CD8-positive, alpha-beta T cell (primary cell): ENCODE measurements at regions of chr3 and their contacts with region 1.

Region 1: DNA sequence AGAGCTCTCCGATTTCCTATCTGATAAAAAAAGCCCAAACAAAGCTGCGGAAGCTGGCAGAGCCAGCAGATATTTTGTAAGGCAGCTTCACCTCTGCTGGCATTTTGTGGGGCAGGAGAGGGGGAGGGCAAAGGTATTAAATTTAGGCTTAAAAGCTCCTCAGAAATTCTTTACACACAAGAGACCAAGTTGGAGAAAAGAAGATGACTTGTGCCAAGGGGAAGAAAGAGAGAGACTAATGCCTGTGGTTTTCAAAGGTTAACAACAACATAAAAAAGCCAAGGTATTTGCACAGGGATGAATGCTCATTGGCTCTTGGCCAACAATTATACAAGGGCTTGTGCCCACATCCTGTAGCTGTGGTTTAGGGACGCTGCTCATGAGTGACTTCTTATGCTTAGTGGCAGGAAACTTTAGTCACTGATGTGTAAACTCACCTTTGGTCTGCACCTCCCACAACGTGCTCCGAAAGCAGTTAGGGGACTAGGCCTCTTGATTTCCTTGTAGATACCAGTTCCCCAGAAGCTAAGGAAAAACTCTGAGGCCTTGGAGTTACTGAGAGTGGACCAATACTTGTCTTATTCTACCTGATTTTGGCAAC is 152.9 kb downstream of the TPRG1 start:
- DNase-seq: peak; percentile 44 to 97 (median 81)
- ATAC-seq: peak; percentile 96
- H3K4me3 ChIP-seq: peak overlapping the region in 1 of 2 experiments; percentile 6
- H3K4me3 Mint-ChIP-seq: peak overlapping the region; percentile 75
- H3K27ac ChIP-seq: peak overlapping the region in 1 of 2 experiments; percentile 55
- H3K27ac Mint-ChIP-seq: peak overlapping the region; percentile 95
- H3K4me1 ChIP-seq: peaks cover 44% of the 10 kb centered on the region
- H3K4me1 Mint-ChIP-seq: peaks cover 68% of the 10 kb centered on the region
- H3K27me3 ChIP-seq: no peaks in the 10 kb centered on the region
- H3K27me3 Mint-ChIP-seq: no peaks in the 10 kb centered on the region
- CTCF ChIP-seq: no peak

Region 2: GRCh38 chr3:189132231-189132707 is 192.4 kb before region 1 on chr3:
- CTCF ChIA-PET with region 1: no interaction called
- POLR2A ChIA-PET with region 1: interaction called, 3 read pairs
- intact Hi-C with region 1: loop called (anchors 2 to 5 kb)
- DNase-seq: peak; percentile 51 to 93 (median 78)
- ATAC-seq: peak; percentile 92
- H3K4me3 ChIP-seq: peak overlapping the region in 1 of 2 experiments; percentile 4
- H3K4me3 Mint-ChIP-seq: peak overlapping the region; percentile 71
- H3K27ac ChIP-seq: peak overlapping the region; percentile 47 to 86
- H3K27ac Mint-ChIP-seq: peak overlapping the region; percentile 97
- H3K4me1 ChIP-seq: peaks cover 24% of the 10 kb centered on the region
- H3K4me1 Mint-ChIP-seq: peaks cover 30% of the 10 kb centered on the region
- H3K27me3 ChIP-seq: no peaks in the 10 kb centered on the region
- H3K27me3 Mint-ChIP-seq: no peaks in the 10 kb centered on the region
- CTCF ChIP-seq: no peak

Region 3: GRCh38 chr3:189288348-189289235 is 36.0 kb before region 1 on chr3:
- CTCF ChIA-PET with region 1: no interaction called
- POLR2A ChIA-PET with region 1: interaction called, 9 read pairs
- intact Hi-C with region 1: loop called in 1 of 2 experiments (anchors 5 kb)
- DNase-seq: no peak
- ATAC-seq: no peak
- H3K4me3 ChIP-seq: no peak overlapping the region
- H3K4me3 Mint-ChIP-seq: no peak overlapping the region
- H3K27ac ChIP-seq: no peak overlapping the region
- H3K27ac Mint-ChIP-seq: no peak overlapping the region
- H3K4me1 ChIP-seq: peaks cover 14% of the 10 kb centered on the region
- H3K4me1 Mint-ChIP-seq: peaks cover 36% of the 10 kb centered on the region
- H3K27me3 ChIP-seq: no peaks in the 10 kb centered on the region
- H3K27me3 Mint-ChIP-seq: no peaks in the 10 kb centered on the region
- CTCF ChIP-seq: no peak

Region 4: DNA sequence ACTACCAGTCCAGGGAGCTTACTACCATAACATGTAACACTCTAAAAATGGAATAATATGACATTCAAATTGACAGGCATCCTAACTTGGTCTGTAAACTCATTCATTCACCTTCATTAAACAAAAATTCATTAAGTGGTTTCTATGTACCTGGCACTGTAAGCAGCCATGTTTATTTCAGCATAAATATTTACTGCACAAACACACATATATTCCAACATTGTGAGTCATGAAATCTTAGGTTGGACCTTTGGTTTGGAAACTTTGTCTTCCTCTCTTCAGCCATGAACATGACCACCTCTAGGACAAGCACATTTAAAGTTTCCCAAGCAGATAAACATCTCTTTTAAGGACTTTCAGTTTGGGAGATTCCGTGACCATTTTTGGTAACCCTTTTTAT is 21.1 kb before region 1 on chr3:
- CTCF ChIA-PET with region 1: no interaction called
- POLR2A ChIA-PET with region 1: interaction called, 7 read pairs
- intact Hi-C with region 1: loop called in 1 of 2 experiments (anchors 2 kb)
- DNase-seq: no peak
- ATAC-seq: no peak
- H3K4me3 ChIP-seq: no peak overlapping the region
- H3K4me3 Mint-ChIP-seq: no peak overlapping the region
- H3K27ac ChIP-seq: no peak overlapping the region
- H3K27ac Mint-ChIP-seq: no peak overlapping the region
- H3K4me1 ChIP-seq: no peaks in the 10 kb centered on the region
- H3K4me1 Mint-ChIP-seq: peaks cover 39% of the 10 kb centered on the region
- H3K27me3 ChIP-seq: no peaks in the 10 kb centered on the region
- H3K27me3 Mint-ChIP-seq: no peaks in the 10 kb centered on the region
- CTCF ChIP-seq: no peak

Region 5: DNA sequence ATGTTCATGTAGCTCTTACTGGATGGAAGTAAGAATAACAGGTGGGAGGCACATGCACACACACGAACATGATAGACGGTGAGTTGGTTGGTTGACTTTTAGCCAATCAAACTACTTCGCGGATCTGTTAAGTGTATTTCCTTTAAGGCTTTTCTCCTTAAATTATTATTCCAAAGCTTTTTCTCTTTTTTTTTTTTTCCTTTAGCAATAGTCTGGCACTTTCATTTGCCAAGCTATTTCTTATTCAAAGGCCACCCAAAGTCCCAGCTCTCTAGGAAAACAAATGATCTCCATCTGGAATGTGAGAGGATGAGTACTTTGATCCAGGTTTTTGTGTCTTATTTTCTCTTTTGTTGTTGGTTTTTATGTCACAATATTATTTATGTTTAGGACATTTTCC is 11.8 kb before region 1 on chr3:
- CTCF ChIA-PET with region 1: interaction called, 3 read pairs
- POLR2A ChIA-PET with region 1: interaction called, 11 read pairs
- intact Hi-C with region 1: no loop called
- DNase-seq: no peak
- ATAC-seq: no peak
- H3K4me3 ChIP-seq: no peak overlapping the region
- H3K4me3 Mint-ChIP-seq: no peak overlapping the region
- H3K27ac ChIP-seq: no peak overlapping the region
- H3K27ac Mint-ChIP-seq: no peak overlapping the region
- H3K4me1 ChIP-seq: no peaks in the 10 kb centered on the region
- H3K4me1 Mint-ChIP-seq: peaks cover 12% of the 10 kb centered on the region
- H3K27me3 ChIP-seq: no peaks in the 10 kb centered on the region
- H3K27me3 Mint-ChIP-seq: no peaks in the 10 kb centered on the region
- CTCF ChIP-seq: no peak

Region 6: DNA sequence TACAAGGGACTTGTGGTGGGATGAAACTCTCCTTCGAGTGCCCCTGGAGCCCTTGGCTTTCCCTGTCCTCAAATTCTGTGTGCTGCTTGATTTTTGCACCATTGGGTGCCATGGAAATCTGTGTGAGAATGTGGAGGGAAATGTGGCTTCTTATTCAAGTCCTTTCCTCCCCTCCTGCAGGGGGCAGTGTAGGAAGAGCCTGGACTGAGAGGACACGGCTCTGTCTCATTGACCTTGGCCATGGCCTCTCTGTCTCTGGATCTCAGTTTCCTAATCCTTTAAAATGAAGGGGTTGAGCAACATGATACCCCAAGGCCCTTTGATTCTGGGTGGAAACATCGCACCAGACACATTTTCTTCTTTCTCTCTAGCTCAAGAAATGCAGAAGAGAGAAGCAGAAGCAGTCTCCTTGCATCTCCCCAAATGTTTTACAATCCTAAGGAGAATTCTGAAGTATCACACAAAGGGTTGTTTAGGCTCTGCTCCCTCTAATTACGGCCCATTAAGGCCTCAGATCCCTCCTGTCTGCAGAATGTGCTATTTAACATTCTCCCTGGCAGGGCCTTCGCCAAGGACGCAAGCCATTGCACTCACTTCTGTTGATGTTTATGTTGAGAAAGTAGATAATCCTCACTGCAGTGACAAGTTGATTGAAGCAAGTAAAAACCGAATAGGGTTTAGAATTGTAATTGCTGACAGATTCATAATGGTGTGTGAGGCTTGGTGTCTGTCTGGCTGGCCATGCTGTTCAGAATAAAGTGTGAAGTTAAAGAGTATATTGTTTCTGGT is 16.2 kb after region 1 on chr3:
- CTCF ChIA-PET with region 1: interaction called, 5 read pairs
- POLR2A ChIA-PET with region 1: interaction called, 4 read pairs
- intact Hi-C with region 1: loop called in 1 of 2 experiments (anchors 2 kb)
- DNase-seq: peak in 2 of 9 experiments; percentile 17 to 34
- ATAC-seq: no peak
- H3K4me3 ChIP-seq: no peak overlapping the region
- H3K4me3 Mint-ChIP-seq: no peak overlapping the region
- H3K27ac ChIP-seq: no peak overlapping the region
- H3K27ac Mint-ChIP-seq: no peak overlapping the region
- H3K4me1 ChIP-seq: no peaks in the 10 kb centered on the region
- H3K4me1 Mint-ChIP-seq: peaks cover 4% of the 10 kb centered on the region
- H3K27me3 ChIP-seq: no peaks in the 10 kb centered on the region
- H3K27me3 Mint-ChIP-seq: no peaks in the 10 kb centered on the region
- CTCF ChIP-seq: no peak

Region 7: DNA sequence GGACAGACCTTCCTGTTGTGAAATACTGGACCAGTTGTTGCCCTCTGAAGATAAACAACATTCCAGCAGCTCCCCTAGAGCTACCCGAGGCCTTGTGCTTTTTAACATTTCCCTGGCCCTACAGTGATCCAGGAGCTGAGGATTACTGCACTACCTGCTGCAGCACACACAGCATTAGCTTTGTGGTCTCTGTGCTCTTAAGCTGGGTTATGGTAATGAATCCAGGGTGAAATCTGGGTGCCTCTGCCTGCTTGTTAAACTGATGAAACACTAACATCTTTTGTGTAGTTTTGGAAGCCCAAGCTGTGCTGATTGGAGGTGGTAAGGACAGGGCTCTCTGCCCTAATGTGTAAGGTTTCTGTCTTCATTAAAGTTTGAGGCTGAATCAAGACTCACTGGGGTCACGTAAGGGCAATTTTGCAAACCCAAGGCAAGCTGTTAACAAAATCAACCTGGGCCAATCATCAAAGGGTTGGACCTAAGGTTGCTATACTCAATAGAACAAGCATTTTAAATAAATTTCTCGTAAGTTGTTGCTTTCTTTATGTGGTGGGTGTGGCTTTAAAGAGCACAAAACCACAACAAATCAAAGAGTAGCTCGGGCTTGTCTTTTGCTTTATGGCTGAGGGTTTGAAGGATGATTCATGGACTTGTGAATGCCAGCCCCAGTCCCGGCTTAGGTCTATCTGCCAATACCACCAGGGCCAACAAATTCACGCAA is 31.0 kb after region 1 on chr3:
- CTCF ChIA-PET with region 1: interaction called, 3 read pairs
- POLR2A ChIA-PET with region 1: interaction called, 16 read pairs
- intact Hi-C with region 1: loop called (anchors 1 kb)
- DNase-seq: peak in 8 of 9 experiments; percentile 23 to 80 (median 52)
- ATAC-seq: peak; percentile 91
- H3K4me3 ChIP-seq: no peak overlapping the region
- H3K4me3 Mint-ChIP-seq: peak overlapping the region; percentile 60
- H3K27ac ChIP-seq: peak overlapping the region in 1 of 2 experiments; percentile 47
- H3K27ac Mint-ChIP-seq: peak overlapping the region; percentile 88
- H3K4me1 ChIP-seq: peaks cover 15% of the 10 kb centered on the region
- H3K4me1 Mint-ChIP-seq: peaks cover 26% of the 10 kb centered on the region
- H3K27me3 ChIP-seq: no peaks in the 10 kb centered on the region
- H3K27me3 Mint-ChIP-seq: no peaks in the 10 kb centered on the region
- CTCF ChIP-seq: no peak

Region 8: GRCh38 chr3:189430166-189430947 is 105.7 kb after region 1 on chr3:
- CTCF ChIA-PET with region 1: no interaction called
- POLR2A ChIA-PET with region 1: no interaction called
- intact Hi-C with region 1: no loop called
- DNase-seq: no peak
- ATAC-seq: no peak
- H3K4me3 ChIP-seq: no peak overlapping the region
- H3K4me3 Mint-ChIP-seq: no peak overlapping the region
- H3K27ac ChIP-seq: no peak overlapping the region
- H3K27ac Mint-ChIP-seq: no peak overlapping the region
- H3K4me1 ChIP-seq: no peaks in the 10 kb centered on the region
- H3K4me1 Mint-ChIP-seq: peaks cover under 1% of the 10 kb centered on the region
- H3K27me3 ChIP-seq: no peaks in the 10 kb centered on the region
- H3K27me3 Mint-ChIP-seq: no peaks in the 10 kb centered on the region
- CTCF ChIP-seq: no peak